ENCODE measurements at regions of chr3 and their contacts with region 1.

Region 1: GRCh38 chr3:32684800-32685542 is at the start of gene CNOT10:
- DNase-seq: peak; percentile 93 to 96 (median 95)
- ATAC-seq: peak; percentile 97
- H3K4me3 ChIP-seq: peak within 1 kb of the TSS; percentile 63
- H3K4me3 Mint-ChIP-seq: peak within 1 kb of the TSS; percentile 82 to 94 (median 92)
- H3K27ac ChIP-seq: peak within 1 kb of the TSS; percentile 86
- H3K27ac Mint-ChIP-seq: peak within 1 kb of the TSS; percentile 91 to 97 (median 96)
- H3K4me1 ChIP-seq: peaks cover 17 to 21% of the 10 kb centered on the region in 2 donors
- H3K4me1 Mint-ChIP-seq: peaks cover 25 to 44% (median 40%) of the 10 kb centered on the region in 7 donors
- H3K27me3 ChIP-seq: no peaks in the 10 kb centered on the region
- H3K27me3 Mint-ChIP-seq: peaks cover 0 to 5% (median 0%) of the 10 kb centered on the region in 5 donors
- total RNA-seq, gene CNOT10: 37.9 to 69.4 (median 46.9) TPM

Region 2: GRCh38 chr3:32113566-32113965 is 571.4 kb before region 1 on chr3:
- CTCF ChIA-PET with region 1: no interaction called
- POLR2A ChIA-PET with region 1: interaction called, 5 read pairs
- intact Hi-C with region 1: loop called in 1 of 2 experiments (anchors 1 kb)
- DNase-seq: no peak
- ATAC-seq: no peak
- H3K4me3 ChIP-seq: no peak overlapping the region
- H3K4me3 Mint-ChIP-seq: peak overlapping the region in 8 of 10 donors; percentile 70 to 90 (median 82)
- H3K27ac ChIP-seq: no peak overlapping the region
- H3K27ac Mint-ChIP-seq: peak overlapping the region in 8 of 9 donors; percentile 74 to 95 (median 92)
- H3K4me1 ChIP-seq: peaks cover 18 to 25% of the 10 kb centered on the region in 2 donors
- H3K4me1 Mint-ChIP-seq: peaks cover 32 to 95% (median 82%) of the 10 kb centered on the region in 7 donors
- H3K27me3 ChIP-seq: no peaks in the 10 kb centered on the region
- H3K27me3 Mint-ChIP-seq: no peaks in the 10 kb centered on the region

Region 3: DNA sequence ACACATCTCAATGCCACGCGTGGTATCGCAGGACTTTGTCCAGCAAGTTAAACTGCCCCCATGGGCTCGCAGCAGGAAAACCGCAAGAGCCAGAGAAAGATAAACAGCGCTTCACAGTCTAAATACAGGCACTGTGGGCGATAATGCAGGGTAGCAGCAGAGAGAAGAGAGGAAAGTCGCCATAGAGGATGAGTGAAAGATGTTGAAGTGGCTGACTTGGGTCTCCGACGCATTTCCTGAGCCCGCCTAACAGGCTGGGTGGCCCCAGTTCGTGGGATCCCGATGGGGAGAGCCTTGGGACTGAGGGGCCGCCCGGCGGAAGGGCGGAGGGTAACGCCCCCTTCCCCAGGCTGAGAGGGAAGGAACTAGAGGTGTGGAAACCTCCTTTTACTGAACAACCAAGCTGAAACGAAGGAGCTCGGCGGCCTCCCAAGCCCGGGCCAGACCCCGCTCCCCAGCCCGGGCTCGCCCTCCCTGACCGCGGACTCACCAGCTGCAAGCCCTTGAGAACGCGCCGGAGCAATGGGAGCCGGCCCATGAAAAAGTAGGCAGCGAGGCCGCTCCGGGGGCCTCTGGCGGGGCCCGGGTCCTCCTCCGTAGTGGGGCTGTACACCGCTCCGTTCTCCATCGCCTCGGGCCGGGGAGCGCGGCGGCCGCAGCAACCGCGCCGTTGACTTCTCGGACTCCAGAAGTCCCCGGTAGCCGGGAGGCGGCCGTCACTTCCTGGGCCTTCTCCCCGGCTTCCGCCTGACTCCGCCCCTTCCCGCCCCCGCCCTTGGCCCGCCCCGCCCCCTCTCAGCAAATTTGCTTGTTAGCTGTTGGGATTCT is 182.6 kb before region 1 on chr3 and contains the start of gene CMTM6:
- CTCF ChIA-PET with region 1: interaction called, 4 read pairs
- POLR2A ChIA-PET with region 1: interaction called, 4 read pairs
- intact Hi-C with region 1: loop called (anchors 1 kb)
- DNase-seq: peak; percentile 49 to 77 (median 70)
- ATAC-seq: peak; percentile 92
- H3K4me3 ChIP-seq: peak within 1 kb of the TSS; percentile 89
- H3K4me3 Mint-ChIP-seq: peak within 1 kb of the TSS; percentile 79 to 97 (median 93)
- H3K27ac ChIP-seq: peak within 1 kb of the TSS; percentile 98
- H3K27ac Mint-ChIP-seq: peak within 1 kb of the TSS; percentile 86 to 98 (median 90)
- H3K4me1 ChIP-seq: peaks cover 6 to 23% of the 10 kb centered on the region in 2 donors
- H3K4me1 Mint-ChIP-seq: peaks cover 28 to 48% (median 43%) of the 10 kb centered on the region in 7 donors
- H3K27me3 ChIP-seq: no peaks in the 10 kb centered on the region
- H3K27me3 Mint-ChIP-seq: peaks cover 0 to 4% (median 0%) of the 10 kb centered on the region in 5 donors
- total RNA-seq, gene CMTM6: 24.1 to 61.1 (median 38.1) TPM

Region 4: DNA sequence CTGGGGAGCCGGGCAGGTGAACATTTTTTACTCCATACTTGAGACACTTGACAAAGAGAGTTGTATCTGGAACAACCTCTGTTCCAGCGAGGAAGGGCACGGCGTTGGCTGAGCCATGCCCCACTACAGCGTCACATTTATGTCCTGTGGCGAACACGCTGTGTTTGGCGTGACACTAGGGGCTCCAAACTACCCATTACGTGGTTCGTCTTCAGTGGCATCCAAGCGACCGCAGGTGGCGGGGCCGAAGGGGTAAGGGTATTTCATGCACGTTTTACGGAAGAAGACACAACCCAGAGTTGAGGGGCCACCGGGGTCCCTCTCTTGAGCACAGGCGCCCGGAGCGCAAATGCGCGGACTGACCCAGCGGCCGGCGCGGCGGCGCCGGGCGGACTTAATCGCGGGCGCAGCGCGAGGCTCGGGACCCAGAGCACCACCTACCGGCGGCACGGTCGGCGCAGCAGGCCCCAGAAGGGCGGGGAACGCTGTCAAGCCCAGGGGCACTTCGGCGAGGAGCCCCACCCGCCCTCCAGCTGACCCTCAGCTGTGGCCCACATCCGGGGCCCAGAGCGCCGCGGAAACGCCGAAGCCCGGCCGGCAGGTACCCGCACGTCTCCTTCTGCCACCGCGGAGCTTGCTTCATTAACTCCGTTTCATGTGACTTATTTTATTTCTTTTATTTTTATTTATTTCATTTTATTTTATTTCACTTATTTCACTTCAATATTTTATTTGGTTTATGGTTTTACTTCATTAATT is 96.4 kb after region 1 on chr3:
- CTCF ChIA-PET with region 1: no interaction called
- POLR2A ChIA-PET with region 1: no interaction called
- intact Hi-C with region 1: loop called in 1 of 2 experiments (anchors 1 kb)
- DNase-seq: peak in 8 of 9 donors; percentile 11 to 80 (median 44)
- ATAC-seq: peak; percentile 93
- H3K4me3 ChIP-seq: peak overlapping the region; percentile 62
- H3K4me3 Mint-ChIP-seq: peak overlapping the region; percentile 86 to 97 (median 91)
- H3K27ac ChIP-seq: no peak overlapping the region
- H3K27ac Mint-ChIP-seq: peak overlapping the region in 3 of 9 donors; percentile 30 to 59 (median 32)
- H3K4me1 ChIP-seq: peaks cover 0 to 7% of the 10 kb centered on the region in 2 donors
- H3K4me1 Mint-ChIP-seq: peaks cover 0 to 9% (median 4%) of the 10 kb centered on the region in 7 donors
- H3K27me3 ChIP-seq: peaks cover 0 to 4% of the 10 kb centered on the region in 2 donors
- H3K27me3 Mint-ChIP-seq: peaks cover 6 to 18% (median 10%) of the 10 kb centered on the region in 5 donors

Region 5: DNA sequence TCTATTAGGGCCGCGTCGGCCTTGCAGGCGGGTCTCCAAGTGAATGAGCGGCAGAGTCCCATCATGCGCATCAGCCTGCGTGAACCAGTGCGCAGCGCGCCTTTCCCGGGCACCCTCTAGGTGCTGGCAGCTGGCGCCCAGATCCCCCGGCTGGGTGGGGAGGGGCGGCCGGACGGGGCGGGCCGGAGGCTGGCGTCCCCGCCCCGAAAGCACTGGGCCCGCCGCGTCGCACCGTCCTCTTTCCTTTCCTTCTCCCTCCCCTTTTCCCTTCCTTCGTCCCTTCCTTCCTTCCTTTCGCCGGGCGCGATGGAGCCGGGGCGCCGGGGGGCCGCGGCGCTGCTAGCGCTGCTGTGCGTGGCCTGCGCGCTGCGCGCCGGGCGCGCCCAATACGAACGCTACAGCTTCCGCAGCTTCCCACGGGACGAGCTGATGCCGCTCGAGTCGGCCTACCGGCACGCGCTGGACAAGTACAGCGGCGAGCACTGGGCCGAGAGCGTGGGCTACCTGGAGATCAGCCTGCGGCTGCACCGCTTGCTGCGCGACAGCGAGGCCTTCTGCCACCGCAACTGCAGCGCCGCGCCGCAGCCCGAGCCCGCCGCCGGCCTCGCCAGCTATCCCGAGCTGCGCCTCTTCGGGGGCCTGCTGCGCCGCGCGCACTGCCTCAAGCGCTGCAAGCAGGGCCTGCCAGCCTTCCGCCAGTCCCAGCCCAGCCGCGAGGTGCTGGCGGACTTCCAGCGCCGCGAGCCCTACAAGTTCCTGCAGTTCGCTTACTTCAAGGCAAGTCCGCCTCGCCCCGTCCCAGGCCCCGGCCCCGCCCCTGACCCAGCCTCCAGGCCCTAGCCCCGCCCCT is 429.0 kb after region 1 on chr3 and contains the start of gene CRTAP:
- CTCF ChIA-PET with region 1: no interaction called
- POLR2A ChIA-PET with region 1: no interaction called
- intact Hi-C with region 1: loop called in 1 of 2 experiments (anchors 5 kb)
- DNase-seq: peak; percentile 69 to 86 (median 79)
- ATAC-seq: peak; percentile 92
- H3K4me3 ChIP-seq: peak within 1 kb of the TSS; percentile 82
- H3K4me3 Mint-ChIP-seq: peak within 1 kb of the TSS; percentile 88 to 95 (median 92)
- H3K27ac ChIP-seq: peak within 1 kb of the TSS; percentile 69
- H3K27ac Mint-ChIP-seq: peak within 1 kb of the TSS; percentile 75 to 91 (median 85)
- H3K4me1 ChIP-seq: peaks cover 17 to 23% of the 10 kb centered on the region in 2 donors
- H3K4me1 Mint-ChIP-seq: peaks cover 23 to 52% (median 37%) of the 10 kb centered on the region in 7 donors
- H3K27me3 ChIP-seq: no peaks in the 10 kb centered on the region
- H3K27me3 Mint-ChIP-seq: no peaks in the 10 kb centered on the region
- total RNA-seq, gene CRTAP: 27.1 to 86.1 (median 46.4) TPM

Region 6: GRCh38 chr3:33187368-33187634 is 502.3 kb after region 1 on chr3:
- CTCF ChIA-PET with region 1: no interaction called
- POLR2A ChIA-PET with region 1: no interaction called
- intact Hi-C with region 1: no loop called
- DNase-seq: no peak
- ATAC-seq: no peak
- H3K4me3 ChIP-seq: no peak overlapping the region
- H3K4me3 Mint-ChIP-seq: no peak overlapping the region
- H3K27ac ChIP-seq: no peak overlapping the region
- H3K27ac Mint-ChIP-seq: no peak overlapping the region
- H3K4me1 ChIP-seq: no peaks in the 10 kb centered on the region
- H3K4me1 Mint-ChIP-seq: no peaks in the 10 kb centered on the region
- H3K27me3 ChIP-seq: no peaks in the 10 kb centered on the region
- H3K27me3 Mint-ChIP-seq: peaks cover 10 to 26% (median 16%) of the 10 kb centered on the region in 5 donors

Region 7: DNA sequence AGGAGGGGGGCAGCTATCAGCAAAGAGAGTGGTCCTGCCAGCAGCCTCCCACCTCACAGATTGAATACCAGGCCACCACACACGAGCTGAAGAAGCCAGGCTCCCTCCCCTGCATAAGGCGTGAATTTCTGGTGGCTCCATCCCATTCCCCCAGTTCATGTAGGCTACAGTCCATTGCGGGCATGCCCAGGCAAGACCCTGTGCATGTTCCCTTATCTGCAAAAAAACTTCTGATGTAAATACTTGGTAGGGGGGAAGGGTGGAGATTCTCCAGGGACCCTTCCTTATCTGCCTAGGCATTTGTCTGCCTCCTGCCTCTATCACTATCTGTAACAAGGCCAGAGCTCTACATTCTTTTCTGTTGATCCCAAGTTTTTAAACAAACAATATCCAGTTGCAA is 782.8 kb after region 1 on chr3:
- CTCF ChIA-PET with region 1: no interaction called
- POLR2A ChIA-PET with region 1: no interaction called
- intact Hi-C with region 1: no loop called
- DNase-seq: no peak
- ATAC-seq: no peak
- H3K4me3 ChIP-seq: no peak overlapping the region
- H3K4me3 Mint-ChIP-seq: no peak overlapping the region
- H3K27ac ChIP-seq: no peak overlapping the region
- H3K27ac Mint-ChIP-seq: no peak overlapping the region
- H3K4me1 ChIP-seq: no peaks in the 10 kb centered on the region
- H3K4me1 Mint-ChIP-seq: peaks cover 0 to 1% (median 0%) of the 10 kb centered on the region in 7 donors
- H3K27me3 ChIP-seq: no peaks in the 10 kb centered on the region
- H3K27me3 Mint-ChIP-seq: no peaks in the 10 kb centered on the region

Region 8: GRCh38 chr3:33798411-33799201 is 1113.6 kb after region 1 on chr3 and contains the start of gene PDCD6IP:
- CTCF ChIA-PET with region 1: no interaction called
- POLR2A ChIA-PET with region 1: no interaction called
- intact Hi-C with region 1: loop called in 1 of 2 experiments (anchors 2 kb)
- DNase-seq: peak; percentile 80 to 90 (median 86)
- ATAC-seq: peak; percentile 88
- H3K4me3 ChIP-seq: peak within 1 kb of the TSS; percentile 97
- H3K4me3 Mint-ChIP-seq: peak within 1 kb of the TSS; percentile 87 to 100 (median 99)
- H3K27ac ChIP-seq: peak within 1 kb of the TSS; percentile 86
- H3K27ac Mint-ChIP-seq: peak within 1 kb of the TSS; percentile 92 to 100 (median 97)
- H3K4me1 ChIP-seq: peaks cover 21 to 24% of the 10 kb centered on the region in 2 donors
- H3K4me1 Mint-ChIP-seq: peaks cover 40 to 77% (median 67%) of the 10 kb centered on the region in 7 donors
- H3K27me3 ChIP-seq: no peaks in the 10 kb centered on the region
- H3K27me3 Mint-ChIP-seq: peaks cover 0 to 7% (median 0%) of the 10 kb centered on the region in 5 donors
- total RNA-seq, gene PDCD6IP: 139 to 221 (median 202) TPM